Aorta (tissue), 5 donors: ENCODE measurements at regions of chr9 and their contacts with region 1.

Region 1: DNA sequence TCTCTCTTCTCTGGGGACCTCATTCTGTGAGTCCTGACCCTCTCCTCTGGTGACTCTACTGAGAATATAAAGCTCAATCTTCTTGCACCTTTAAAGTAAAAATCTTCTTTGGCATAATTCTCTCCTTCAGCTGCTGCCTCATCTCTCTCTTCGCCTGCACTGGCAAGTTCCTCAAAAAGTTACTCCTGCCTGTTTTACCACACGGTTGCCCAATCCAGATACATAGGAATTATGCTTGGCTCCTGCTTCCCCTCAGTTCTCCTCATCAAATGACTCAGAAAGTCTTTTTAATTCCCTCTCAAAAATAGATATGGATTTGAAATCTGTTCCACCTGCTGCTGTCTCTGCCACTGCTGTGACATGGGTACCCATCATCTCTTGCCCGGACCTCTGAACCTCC is 14.4 kb upstream of the HRCT1 start:
- DNase-seq: no peak
- ATAC-seq: no peak
- H3K4me3 ChIP-seq: no peak overlapping the region
- H3K27ac ChIP-seq: no peak overlapping the region
- H3K4me1 ChIP-seq: no peaks in the 10 kb centered on the region
- H3K27me3 ChIP-seq: no peaks in the 10 kb centered on the region

Region 2: DNA sequence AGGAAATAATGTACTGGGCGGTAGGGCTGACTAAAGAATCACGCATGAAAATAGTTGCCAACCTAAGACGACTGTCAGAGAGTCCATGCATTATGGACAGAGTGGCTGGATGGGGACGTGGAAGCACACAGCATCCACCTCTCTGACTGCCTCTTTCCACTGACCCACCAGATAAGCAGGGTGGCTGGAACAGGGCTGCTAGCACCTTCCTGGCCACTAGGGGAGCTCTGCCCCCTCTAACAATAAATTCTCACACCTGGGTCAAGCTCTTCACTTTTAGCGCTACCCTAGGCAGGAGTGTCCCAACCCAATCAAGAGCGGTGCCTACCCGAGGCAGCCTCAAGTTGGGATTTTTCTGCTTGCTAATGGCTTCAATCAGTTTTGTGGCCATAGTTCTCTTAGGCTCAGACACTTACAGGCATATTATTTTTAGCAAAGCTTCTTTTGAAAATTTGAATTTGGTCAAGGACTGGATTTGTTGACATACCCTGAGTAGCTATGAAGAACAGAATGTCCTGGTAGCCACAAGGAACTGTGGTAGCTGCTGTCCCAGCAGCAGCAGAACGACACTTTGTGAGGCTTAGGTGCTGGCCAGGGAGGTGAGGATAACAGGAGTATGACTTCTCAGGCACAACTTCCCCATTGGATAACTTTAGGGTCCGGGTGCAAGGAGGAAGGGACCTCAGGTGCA is 195.0 kb before region 1 on chr9:
- intact Hi-C with region 1: no loop called
- DNase-seq: peak; percentile 63 to 83
- ATAC-seq: peak; percentile 66
- H3K4me3 ChIP-seq: no peak overlapping the region
- H3K27ac ChIP-seq: peak overlapping the region; percentile 97 to 99
- H3K4me1 ChIP-seq: no peaks in the 10 kb centered on the region
- H3K27me3 ChIP-seq: no peaks in the 10 kb centered on the region

Region 3: DNA sequence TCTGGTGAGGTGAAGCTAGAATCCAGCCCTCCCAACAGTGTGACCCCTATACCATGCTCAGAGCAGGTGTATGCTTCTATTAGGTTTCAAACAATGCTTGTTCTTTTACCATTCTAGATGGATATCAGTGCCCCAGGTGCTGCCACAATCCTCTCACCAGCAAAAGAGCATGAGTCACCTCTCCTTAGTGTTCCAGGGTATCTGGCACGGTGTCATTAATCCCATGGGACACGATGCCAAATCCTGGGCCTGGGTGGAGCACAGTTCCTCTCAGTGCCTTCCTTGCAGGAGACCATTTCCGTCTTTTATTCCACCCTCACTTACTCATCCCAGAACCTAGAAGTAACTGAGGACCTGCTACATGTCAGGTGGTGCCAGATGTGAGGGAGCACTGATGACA is 20.1 kb before region 1 on chr9:
- intact Hi-C with region 1: loop called in 1 of 2 experiments (anchors 2 kb)
- DNase-seq: peak in 1 of 2 donors; percentile 29
- ATAC-seq: peak; percentile 29
- H3K4me3 ChIP-seq: no peak overlapping the region
- H3K27ac ChIP-seq: no peak overlapping the region
- H3K4me1 ChIP-seq: no peaks in the 10 kb centered on the region
- H3K27me3 ChIP-seq: no peaks in the 10 kb centered on the region